ENCODE measurements at regions of chr18 and their contacts with region 1.

Region 1: DNA sequence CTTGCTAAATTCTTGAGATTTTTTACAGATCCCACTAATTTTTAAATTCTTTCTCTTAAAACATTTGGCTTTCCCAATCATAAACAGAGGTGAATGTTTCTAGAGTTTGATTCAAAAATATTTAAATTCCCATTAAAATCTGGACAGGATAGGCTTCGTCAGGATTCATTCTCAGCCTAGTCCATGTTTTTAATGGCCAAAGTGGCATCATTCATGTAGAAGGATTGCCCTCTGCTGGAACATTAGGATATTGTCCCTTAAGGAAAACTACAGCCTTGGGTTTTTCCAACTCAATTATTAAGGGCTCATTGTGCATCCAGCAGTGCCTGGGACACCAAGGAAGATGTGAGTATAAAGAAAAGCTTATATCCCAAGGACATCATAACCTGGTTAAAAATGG is 71.7 kb downstream of the TPGS2 start:
- DNase-seq: peak; percentile 27
- ATAC-seq: peak; percentile 87
- H3K4me3 ChIP-seq: no peak overlapping the region
- H3K27ac ChIP-seq: no peak overlapping the region
- H3K4me1 ChIP-seq: no peaks in the 10 kb centered on the region
- H3K27me3 ChIP-seq: no peaks in the 10 kb centered on the region
- CTCF ChIP-seq: peak; percentile 63; the same call in 1 of the 2 replicates

Region 2: DNA sequence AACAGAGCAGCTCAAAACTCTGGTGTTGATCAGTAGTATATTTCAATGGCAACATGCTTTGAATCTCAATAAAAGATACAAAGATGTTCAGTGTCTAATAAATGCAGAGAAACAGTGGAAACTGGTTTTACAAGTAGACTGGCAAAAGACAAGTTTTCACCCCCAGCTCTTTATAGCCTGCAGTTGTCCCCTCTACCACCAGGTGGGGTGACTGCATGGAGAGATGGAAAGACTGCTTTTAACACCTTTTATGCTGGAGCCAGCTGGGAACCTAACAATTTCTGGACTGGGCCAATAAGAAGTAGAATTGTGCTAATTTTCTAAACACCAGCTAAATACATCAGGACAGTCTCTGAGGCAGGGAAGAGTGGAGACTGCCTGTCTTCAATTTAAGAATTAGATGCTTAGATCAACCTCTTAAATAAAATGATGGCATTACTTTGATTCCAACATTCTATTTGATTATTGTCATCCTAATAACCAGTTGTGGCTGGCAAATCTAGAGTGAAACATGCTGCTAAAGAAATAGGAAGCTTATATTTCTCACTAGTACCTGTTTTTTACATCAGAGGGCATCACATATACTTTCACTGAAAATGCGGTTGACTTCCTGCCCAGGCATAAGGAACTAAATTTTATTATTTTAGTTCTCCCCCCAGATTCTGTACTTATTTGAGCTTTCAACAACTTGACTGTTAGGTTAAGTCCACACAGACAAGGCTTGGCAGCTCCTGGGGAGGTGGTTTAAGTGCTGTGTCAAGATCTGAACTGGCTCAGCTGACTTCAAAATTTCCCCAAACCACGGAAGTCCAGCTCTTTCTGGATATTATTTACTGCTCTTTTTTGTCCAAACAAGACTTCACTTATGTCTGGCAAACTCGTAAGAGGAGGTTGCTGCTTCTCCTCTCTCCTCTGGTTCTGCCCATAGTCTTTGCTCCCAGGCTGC is 68.8 kb before region 1 on chr18:
- CTCF ChIA-PET with region 1: no interaction called
- POLR2A ChIA-PET with region 1: no interaction called
- in situ Hi-C with region 1: no loop called
- intact Hi-C with region 1: loop called (anchors 2 kb)
- DNase-seq: peak; percentile 50
- ATAC-seq: no peak
- H3K4me3 ChIP-seq: no peak overlapping the region
- H3K27ac ChIP-seq: no peak overlapping the region
- H3K4me1 ChIP-seq: no peaks in the 10 kb centered on the region
- H3K27me3 ChIP-seq: no peaks in the 10 kb centered on the region
- CTCF ChIP-seq: peak; percentile 84

Region 3: GRCh38 chr18:37450434-37451132 is 693.5 kb after region 1 on chr18:
- CTCF ChIA-PET with region 1: no interaction called
- POLR2A ChIA-PET with region 1: no interaction called
- in situ Hi-C with region 1: no loop called
- intact Hi-C with region 1: no loop called
- DNase-seq: no peak
- ATAC-seq: no peak
- H3K4me3 ChIP-seq: no peak overlapping the region
- H3K27ac ChIP-seq: no peak overlapping the region
- H3K4me1 ChIP-seq: no peaks in the 10 kb centered on the region
- H3K27me3 ChIP-seq: no peaks in the 10 kb centered on the region; the same call in 1 of the 2 replicates
- CTCF ChIP-seq: no peak